GM12878 (cell line): ENCODE measurements at regions of chr2 and their contacts with region 1.

Region 1: GRCh38 chr2:230924470-230925341 is at the start of gene GPR55:
- DNase-seq: peak; percentile 56
- ATAC-seq: peak; percentile 51
- H3K4me3 ChIP-seq: peak within 1 kb of the TSS; percentile 78
- H3K27ac ChIP-seq: peak within 1 kb of the TSS; percentile 98
- H3K4me1 ChIP-seq: peaks cover 42% of the 10 kb centered on the region
- H3K27me3 ChIP-seq: no peaks in the 10 kb centered on the region
- CTCF ChIP-seq: peak; percentile 69 to 78 (median 75)
- EP300 ChIP-seq: peak in 1 of 2 experiments; percentile 44; a peak in 2 of 4 replicates
- POLR2A ChIP-seq: peak; percentile 78
- RAD21 ChIP-seq: peak; percentile 64
- polyA plus RNA-seq, gene GPR55: 2.1 to 5.5 TPM

Region 2: DNA sequence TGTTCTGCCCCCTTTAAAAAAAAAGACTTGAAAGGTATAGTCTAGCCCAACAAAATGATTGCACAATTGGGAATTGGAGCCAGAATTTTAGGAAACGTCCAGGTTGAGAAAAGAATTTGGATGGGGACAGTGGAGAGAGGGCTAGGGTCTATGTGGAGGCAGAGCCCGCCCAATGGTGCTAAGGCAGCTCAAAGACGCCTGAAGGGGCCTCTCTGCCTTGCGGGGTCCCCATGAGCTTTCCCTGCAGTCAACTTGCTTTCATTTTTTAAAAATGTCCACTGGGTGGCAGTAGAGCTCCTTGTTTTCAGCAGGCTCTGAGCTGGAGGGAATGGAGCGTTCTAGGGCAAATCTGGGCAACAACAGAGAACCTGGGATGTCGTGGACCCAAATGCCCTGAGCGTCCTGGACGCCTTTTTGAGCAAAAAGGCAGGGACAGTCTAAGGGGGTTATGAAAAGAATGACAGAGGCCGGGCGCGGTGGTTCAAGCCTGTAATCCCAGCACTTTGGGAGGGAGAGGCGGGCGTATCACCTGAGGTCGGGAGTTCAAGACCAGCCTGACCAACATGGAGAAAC is 100.2 kb before region 1 on chr2:
- CTCF ChIA-PET with region 1: interaction called, 17 read pairs
- POLR2A ChIA-PET with region 1: interaction called, 5 read pairs
- RAD21 ChIA-PET with region 1: interaction called, 15 read pairs
- SMC1A ChIA-PET with region 1: interaction called, 13 read pairs
- in situ Hi-C with region 1: no loop called
- intact Hi-C with region 1: no loop called
- DNase-seq: peak; percentile 45
- ATAC-seq: peak; percentile 88
- H3K4me3 ChIP-seq: no peak overlapping the region
- H3K27ac ChIP-seq: no peak overlapping the region
- H3K4me1 ChIP-seq: peaks cover 5% of the 10 kb centered on the region; the same call in 1 of the 2 replicates
- H3K27me3 ChIP-seq: no peaks in the 10 kb centered on the region
- CTCF ChIP-seq: peak; percentile 59 to 77 (median 62)
- EP300 ChIP-seq: no peak
- POLR2A ChIP-seq: no peak
- RAD21 ChIP-seq: peak; percentile 91

Region 3: DNA sequence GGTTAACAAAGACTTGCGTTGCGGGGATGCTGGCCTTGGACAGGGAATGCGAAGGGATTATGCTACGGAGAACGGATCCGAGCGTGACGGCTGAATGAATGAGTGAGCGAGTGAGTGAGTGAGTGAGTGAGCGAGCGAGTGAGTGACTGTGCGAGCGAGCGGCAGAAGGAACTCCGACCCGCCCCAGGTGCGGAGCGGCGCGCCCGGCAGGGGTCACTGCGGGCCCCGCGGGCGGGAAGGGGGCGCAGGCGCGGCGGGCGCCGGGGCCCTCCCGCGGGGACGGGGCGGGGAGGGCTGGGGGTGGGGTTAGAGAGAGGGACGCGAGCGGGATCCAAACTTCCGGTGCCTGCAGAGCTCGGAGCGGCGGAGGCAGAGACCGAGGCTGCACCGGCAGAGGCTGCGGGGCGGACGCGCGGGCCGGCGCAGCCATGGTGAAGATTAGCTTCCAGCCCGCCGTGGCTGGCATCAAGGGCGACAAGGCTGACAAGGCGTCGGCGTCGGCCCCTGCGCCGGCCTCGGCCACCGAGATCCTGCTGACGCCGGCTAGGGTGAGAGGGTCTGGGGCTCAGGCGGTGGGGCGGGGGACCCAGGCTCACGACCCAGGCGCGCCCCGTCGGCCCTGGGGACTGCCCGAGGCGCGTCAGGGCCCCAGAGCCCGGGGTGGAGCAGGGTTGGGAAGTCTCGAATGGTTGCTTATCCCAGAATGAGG is 60.0 kb before region 1 on chr2 and contains the start of gene ITM2C:
- CTCF ChIA-PET with region 1: interaction called, 25 read pairs
- POLR2A ChIA-PET with region 1: interaction called, 5 read pairs
- RAD21 ChIA-PET with region 1: interaction called, 5 read pairs
- SMC1A ChIA-PET with region 1: interaction called, 4 read pairs
- in situ Hi-C with region 1: no loop called
- intact Hi-C with region 1: no loop called
- DNase-seq: no peak
- ATAC-seq: peak; percentile 84
- H3K4me3 ChIP-seq: peak within 1 kb of the TSS; percentile 97
- H3K27ac ChIP-seq: peak within 1 kb of the TSS; percentile 38
- H3K4me1 ChIP-seq: peaks cover 18% of the 10 kb centered on the region
- H3K27me3 ChIP-seq: no peaks in the 10 kb centered on the region; a peak in 2 of 4 replicates
- CTCF ChIP-seq: peak; percentile 50 to 52 (median 52); a peak in 5 of 6 replicates
- EP300 ChIP-seq: no peak
- POLR2A ChIP-seq: peak; percentile 87
- RAD21 ChIP-seq: peak; percentile 48
- polyA plus RNA-seq, gene ITM2C: 5.4 to 16.9 TPM

Region 4: GRCh38 chr2:230893841-230894781 is 30.6 kb before region 1 on chr2:
- CTCF ChIA-PET with region 1: interaction called, 122 read pairs
- POLR2A ChIA-PET with region 1: interaction called, 3 read pairs
- RAD21 ChIA-PET with region 1: interaction called, 7 read pairs
- SMC1A ChIA-PET with region 1: interaction called, 5 read pairs
- in situ Hi-C with region 1: no loop called
- intact Hi-C with region 1: no loop called
- DNase-seq: no peak
- ATAC-seq: peak; percentile 71
- H3K4me3 ChIP-seq: no peak overlapping the region
- H3K27ac ChIP-seq: 0 out of 2 replicates have a peak overlapping the region, but pooled peaks have one; percentile 7
- H3K4me1 ChIP-seq: peaks cover 39% of the 10 kb centered on the region
- H3K27me3 ChIP-seq: no peaks in the 10 kb centered on the region
- CTCF ChIP-seq: no peak
- EP300 ChIP-seq: no peak; a peak in 1 of 4 replicates
- POLR2A ChIP-seq: no peak
- RAD21 ChIP-seq: no peak

Region 5: DNA sequence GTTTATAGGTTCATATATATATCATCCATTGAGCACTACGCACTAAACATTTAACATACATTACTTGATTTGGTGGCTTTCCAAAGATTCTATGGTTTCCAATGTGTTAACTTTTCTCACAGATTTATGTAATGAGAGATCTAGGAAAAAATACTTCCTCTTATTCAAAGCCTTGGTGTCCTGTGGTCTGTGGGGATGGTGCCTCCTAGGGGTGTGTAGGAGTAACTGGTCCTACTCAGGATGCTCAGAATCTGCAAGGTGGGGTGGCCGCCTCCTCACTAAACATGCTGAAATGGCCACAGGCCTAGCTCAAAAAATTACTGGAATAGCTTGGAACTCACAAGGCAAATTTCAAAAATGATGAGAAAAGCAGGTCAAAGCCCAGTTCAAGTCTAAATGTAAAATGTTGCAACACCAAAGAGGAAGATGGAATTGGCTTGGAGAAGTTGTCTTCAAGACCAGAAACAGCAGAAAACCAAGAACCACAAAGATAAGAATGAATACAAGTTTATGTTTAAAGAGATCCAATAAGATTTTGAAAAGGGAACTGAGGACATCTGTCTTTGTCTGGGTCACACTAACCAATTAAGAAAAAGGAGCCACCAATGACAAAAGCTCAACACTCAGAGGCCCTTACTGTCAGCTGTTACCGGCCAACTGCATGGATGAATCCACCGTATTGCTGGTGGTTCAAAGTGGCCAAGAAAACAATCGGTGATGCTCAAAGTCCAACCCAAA is 11.1 kb before region 1 on chr2:
- CTCF ChIA-PET with region 1: interaction called, 58 read pairs
- POLR2A ChIA-PET with region 1: interaction called, 6 read pairs
- RAD21 ChIA-PET with region 1: interaction called, 24 read pairs
- SMC1A ChIA-PET with region 1: interaction called, 59 read pairs
- in situ Hi-C with region 1: no loop called
- intact Hi-C with region 1: no loop called
- DNase-seq: no peak
- ATAC-seq: peak; percentile 75
- H3K4me3 ChIP-seq: no peak overlapping the region
- H3K27ac ChIP-seq: peak overlapping the region; percentile 13; the same call in 1 of the 2 replicates
- H3K4me1 ChIP-seq: peaks cover 23% of the 10 kb centered on the region
- H3K27me3 ChIP-seq: no peaks in the 10 kb centered on the region
- CTCF ChIP-seq: peak; percentile 45 to 61 (median 60)
- EP300 ChIP-seq: no peak
- POLR2A ChIP-seq: no peak
- RAD21 ChIP-seq: peak; percentile 62

Region 6: GRCh38 chr2:230956827-230957755 is 32.4 kb after region 1 on chr2:
- CTCF ChIA-PET with region 1: interaction called, 73 read pairs
- POLR2A ChIA-PET with region 1: interaction called, 91 read pairs
- RAD21 ChIA-PET with region 1: interaction called, 24 read pairs
- SMC1A ChIA-PET with region 1: interaction called, 248 read pairs
- in situ Hi-C with region 1: no loop called
- intact Hi-C with region 1: no loop called
- DNase-seq: peak; percentile 91
- ATAC-seq: peak; percentile 79
- H3K4me3 ChIP-seq: peak overlapping the region; percentile 72
- H3K27ac ChIP-seq: peak overlapping the region; percentile 99
- H3K4me1 ChIP-seq: peaks cover 54% of the 10 kb centered on the region
- H3K27me3 ChIP-seq: no peaks in the 10 kb centered on the region
- CTCF ChIP-seq: no peak
- EP300 ChIP-seq: peak; percentile 84 to 92; a peak in 2 of 4 replicates
- POLR2A ChIP-seq: peak; percentile 87
- RAD21 ChIP-seq: peak; percentile 37; the same call in 1 of the 2 replicates

Region 7: DNA sequence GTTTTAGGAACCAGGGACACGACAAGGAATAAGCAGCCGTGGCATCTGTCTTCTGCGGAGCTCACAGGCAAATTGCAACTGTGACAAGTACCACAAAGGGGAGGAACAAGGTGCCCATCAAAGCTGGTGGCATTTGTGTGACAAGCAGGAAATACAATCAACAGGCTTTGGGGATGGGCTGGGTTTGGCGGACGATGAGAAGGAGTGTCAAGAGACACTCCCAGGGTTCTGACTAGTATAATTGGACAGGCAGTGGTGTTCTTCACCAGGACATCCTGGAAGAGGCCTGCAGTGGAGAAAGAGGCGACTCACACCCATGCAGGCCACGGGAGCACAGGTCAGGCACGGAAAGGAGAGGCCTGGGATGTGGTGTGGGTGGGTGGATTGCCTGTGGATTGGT is 57.0 kb after region 1 on chr2:
- CTCF ChIA-PET with region 1: interaction called, 315 read pairs
- POLR2A ChIA-PET with region 1: interaction called, 117 read pairs
- RAD21 ChIA-PET with region 1: interaction called, 261 read pairs
- SMC1A ChIA-PET with region 1: interaction called, 219 read pairs
- in situ Hi-C with region 1: loop called (anchors 10 kb)
- intact Hi-C with region 1: loop called (anchors 1 kb)
- DNase-seq: no peak
- ATAC-seq: no peak
- H3K4me3 ChIP-seq: no peak overlapping the region
- H3K27ac ChIP-seq: peak overlapping the region; percentile 100
- H3K4me1 ChIP-seq: peaks cover 89% of the 10 kb centered on the region
- H3K27me3 ChIP-seq: no peaks in the 10 kb centered on the region
- CTCF ChIP-seq: no peak
- EP300 ChIP-seq: no peak
- POLR2A ChIP-seq: no peak
- RAD21 ChIP-seq: no peak

Region 8: GRCh38 chr2:231084565-231084964 is 159.9 kb after region 1 on chr2:
- CTCF ChIA-PET with region 1: no interaction called
- POLR2A ChIA-PET with region 1: no interaction called
- RAD21 ChIA-PET with region 1: no interaction called
- SMC1A ChIA-PET with region 1: no interaction called
- in situ Hi-C with region 1: no loop called
- intact Hi-C with region 1: no loop called
- DNase-seq: no peak
- ATAC-seq: no peak
- H3K4me3 ChIP-seq: no peak overlapping the region
- H3K27ac ChIP-seq: no peak overlapping the region
- H3K4me1 ChIP-seq: no peaks in the 10 kb centered on the region
- H3K27me3 ChIP-seq: no peaks in the 10 kb centered on the region
- CTCF ChIP-seq: no peak
- EP300 ChIP-seq: no peak
- POLR2A ChIP-seq: no peak
- RAD21 ChIP-seq: no peak